Vagina (tissue), 2 donors: ENCODE measurements at regions of chrX and their contacts with region 1.

Region 1: DNA sequence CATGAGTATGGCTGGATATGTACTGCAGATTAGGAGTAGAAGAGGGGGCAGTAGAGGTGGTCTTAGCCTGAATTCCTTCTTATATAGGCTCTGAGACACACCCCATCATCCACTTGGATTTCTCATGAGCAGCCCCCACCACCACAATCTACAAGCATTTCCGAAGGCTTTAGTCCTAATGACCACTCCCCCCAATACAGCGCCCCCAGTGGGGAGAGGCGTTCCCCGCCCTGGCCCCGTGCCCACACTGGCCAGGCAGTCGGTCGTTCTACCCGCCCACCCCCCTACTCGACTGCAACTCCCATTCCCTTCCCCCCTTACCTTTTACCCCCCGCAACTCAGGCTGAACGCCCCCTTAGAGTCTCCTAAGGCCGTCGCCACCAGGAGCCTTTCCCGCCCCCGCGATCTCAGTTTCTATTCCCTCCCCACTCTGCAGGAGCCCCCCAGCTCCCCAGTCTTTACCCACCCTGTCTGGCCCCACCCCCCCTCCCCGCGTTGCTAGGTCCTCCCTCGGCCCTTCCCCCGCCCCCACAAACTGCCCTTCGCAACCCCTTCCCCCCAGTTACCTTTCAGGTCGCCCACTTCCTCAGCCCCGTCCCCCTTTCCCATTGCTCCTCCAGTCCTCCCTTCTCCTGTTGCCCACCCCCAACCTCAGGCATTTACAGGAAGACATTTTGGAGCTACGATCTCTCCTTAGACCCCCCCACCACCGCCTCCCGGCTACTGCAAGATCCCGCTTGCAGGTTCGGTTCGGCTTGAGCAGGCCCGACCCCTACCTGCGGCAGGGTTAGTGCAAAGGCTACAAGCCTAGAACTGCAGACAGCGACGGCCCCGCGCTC is 468 bp downstream of the ZMYM3 start:
- DNase-seq: no peak
- H3K4me3 ChIP-seq: peak overlapping the region; percentile 56 to 65
- H3K27ac ChIP-seq: peak overlapping the region; percentile 84
- H3K4me1 ChIP-seq: peaks cover 16% of the 10 kb centered on the region
- H3K27me3 ChIP-seq: no peaks in the 10 kb centered on the region
- CTCF ChIP-seq: no peak
- POLR2A ChIP-seq: no peak

Region 2: GRCh38 chrX:71053217-71053621 is 200.3 kb before region 1 on chrX:
- intact Hi-C with region 1: no loop called
- DNase-seq: no peak
- H3K4me3 ChIP-seq: no peak overlapping the region
- H3K27ac ChIP-seq: no peak overlapping the region
- H3K4me1 ChIP-seq: no peaks in the 10 kb centered on the region
- H3K27me3 ChIP-seq: no peaks in the 10 kb centered on the region
- CTCF ChIP-seq: no peak
- POLR2A ChIP-seq: no peak

Region 3: GRCh38 chrX:71365876-71366673 is 112.6 kb after region 1 on chrX and contains the start of gene TAF1:
- intact Hi-C with region 1: loop called (anchors 2 kb)
- DNase-seq: peak; percentile 97 to 98
- H3K4me3 ChIP-seq: peak within 1 kb of the TSS; percentile 51 to 63
- H3K27ac ChIP-seq: peak within 1 kb of the TSS; percentile 74
- H3K4me1 ChIP-seq: peaks cover 21% of the 10 kb centered on the region
- H3K27me3 ChIP-seq: no peaks in the 10 kb centered on the region
- CTCF ChIP-seq: no peak
- POLR2A ChIP-seq: peak in 1 of 2 donors; percentile 10
- total RNA-seq, gene TAF1: 49.8 TPM

Region 4: GRCh38 chrX:71393919-71394318 is 140.4 kb after region 1 on chrX:
- intact Hi-C with region 1: no loop called
- DNase-seq: no peak
- H3K4me3 ChIP-seq: no peak overlapping the region
- H3K27ac ChIP-seq: no peak overlapping the region
- H3K4me1 ChIP-seq: no peaks in the 10 kb centered on the region
- H3K27me3 ChIP-seq: no peaks in the 10 kb centered on the region
- CTCF ChIP-seq: no peak
- POLR2A ChIP-seq: no peak

Region 5: DNA sequence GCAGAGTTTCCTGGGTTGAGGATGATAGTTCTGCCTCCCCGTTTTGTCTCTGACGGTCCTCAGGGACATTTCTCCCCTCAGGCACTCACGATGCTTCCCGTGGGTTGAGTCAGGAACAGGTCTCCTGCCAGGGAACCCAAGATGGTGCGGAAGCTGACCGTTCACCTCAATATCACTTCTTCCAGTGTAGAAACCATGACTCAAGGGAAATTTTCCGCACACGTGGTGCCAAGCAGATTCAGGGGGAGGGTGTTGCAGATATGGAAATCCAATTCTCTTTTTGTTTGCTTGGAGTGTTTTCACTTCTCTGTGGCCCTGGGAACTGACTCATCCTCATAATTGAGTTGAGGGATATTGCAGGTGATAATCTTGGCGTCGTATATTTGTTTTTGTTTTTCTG is 556.4 kb after region 1 on chrX:
- intact Hi-C with region 1: no loop called
- DNase-seq: no peak
- H3K4me3 ChIP-seq: no peak overlapping the region
- H3K27ac ChIP-seq: no peak overlapping the region
- H3K4me1 ChIP-seq: no peaks in the 10 kb centered on the region
- H3K27me3 ChIP-seq: no peaks in the 10 kb centered on the region
- CTCF ChIP-seq: no peak
- POLR2A ChIP-seq: no peak